ENCODE measurements at regions of chr7 and their contacts with region 1.

Region 1: DNA sequence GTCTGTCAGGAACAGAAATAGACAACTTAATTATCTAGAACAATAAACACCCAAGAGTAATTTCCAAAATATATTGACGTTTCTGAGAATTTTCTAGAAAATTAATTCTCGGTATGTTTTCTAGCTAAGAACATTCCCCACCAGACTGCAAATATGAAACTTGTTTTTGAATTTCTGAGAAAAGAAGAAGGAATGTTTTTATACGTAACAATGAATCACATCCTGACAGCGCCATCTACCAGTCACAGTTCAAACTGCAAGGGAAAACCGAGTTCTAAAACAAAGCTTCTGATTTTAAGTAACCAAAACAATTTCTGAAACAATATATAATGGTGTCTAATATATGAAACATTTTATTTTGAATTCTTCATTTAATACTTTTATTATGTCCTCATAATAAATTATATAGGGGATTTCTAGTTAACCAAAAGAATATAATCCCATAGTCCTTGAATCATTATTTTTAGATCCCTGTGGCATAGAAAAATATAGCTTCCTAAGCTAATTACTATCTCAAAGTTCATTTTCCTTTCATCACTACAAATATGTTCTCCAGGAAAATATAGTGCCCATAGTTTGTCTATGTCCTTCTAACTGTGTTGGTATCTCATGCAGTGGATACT is 34.5 kb upstream of the MEOX2 start:
- DNase-seq: peak; percentile 62
- H3K4me3 Mint-ChIP-seq: no peak overlapping the region
- H3K27ac Mint-ChIP-seq: no peak overlapping the region
- H3K4me1 Mint-ChIP-seq: peaks cover 22% of the 10 kb centered on the region
- H3K27me3 Mint-ChIP-seq: no peaks in the 10 kb centered on the region
- CTCF ChIP-seq: peak; percentile 85

Region 2: DNA sequence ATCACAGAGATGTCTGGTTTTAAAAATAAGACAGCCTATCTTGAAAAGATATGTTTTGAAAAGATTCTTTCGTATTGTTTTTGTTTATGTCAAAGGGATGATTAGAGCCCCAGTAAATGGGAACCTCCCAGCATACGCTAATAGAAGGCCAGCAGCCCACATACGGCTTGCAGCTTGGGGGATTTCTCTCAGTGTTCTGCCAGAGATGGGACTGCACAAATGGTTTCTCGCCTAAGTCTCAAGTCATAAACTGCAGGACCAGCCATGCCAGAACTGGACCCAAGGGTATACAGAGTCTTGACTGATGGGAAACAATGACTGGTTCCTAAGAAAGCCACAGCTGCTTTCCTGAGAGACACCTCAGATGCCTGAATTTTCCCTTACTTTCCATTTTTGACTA is 511.5 kb before region 1 on chr7:
- CTCF ChIA-PET with region 1: no interaction called
- intact Hi-C with region 1: loop called (anchors 10 kb)
- DNase-seq: no peak
- H3K4me3 Mint-ChIP-seq: no peak overlapping the region
- H3K27ac Mint-ChIP-seq: no peak overlapping the region
- H3K4me1 Mint-ChIP-seq: no peaks in the 10 kb centered on the region
- H3K27me3 Mint-ChIP-seq: no peaks in the 10 kb centered on the region
- CTCF ChIP-seq: no peak

Region 3: DNA sequence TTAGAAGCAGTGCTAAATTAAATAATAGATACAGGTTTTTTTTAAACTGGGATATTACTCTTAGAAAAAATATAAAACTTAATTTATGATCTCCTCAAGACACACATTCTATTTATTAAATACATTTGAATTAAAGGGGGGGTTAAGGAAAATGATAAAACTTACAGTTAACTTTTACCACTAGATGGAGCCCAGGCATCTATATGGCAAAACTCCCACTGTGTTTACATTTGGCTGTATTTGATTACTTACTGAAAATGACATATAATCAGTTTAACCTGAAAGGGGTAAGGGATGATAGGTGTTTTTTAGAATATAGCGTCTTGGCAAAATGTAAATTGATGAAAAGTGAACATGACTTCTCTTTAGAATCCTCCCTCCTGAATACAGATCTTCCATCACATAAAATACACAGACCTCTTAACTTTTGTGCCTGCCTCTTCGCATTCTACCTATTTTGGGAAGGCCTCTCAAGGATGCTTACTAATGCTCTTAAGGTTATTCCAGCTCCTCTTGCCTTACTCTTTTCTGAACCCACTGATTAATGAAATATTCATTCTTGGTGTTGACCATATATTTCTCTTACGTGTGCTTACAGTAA is 394.8 kb before region 1 on chr7:
- CTCF ChIA-PET with region 1: interaction called, 3 read pairs
- intact Hi-C with region 1: loop called (anchors 1 kb)
- DNase-seq: no peak
- H3K4me3 Mint-ChIP-seq: no peak overlapping the region
- H3K27ac Mint-ChIP-seq: no peak overlapping the region
- H3K4me1 Mint-ChIP-seq: no peaks in the 10 kb centered on the region
- H3K27me3 Mint-ChIP-seq: no peaks in the 10 kb centered on the region
- CTCF ChIP-seq: peak; percentile 58

Region 4: GRCh38 chr7:15424468-15424867 is 296.5 kb before region 1 on chr7:
- CTCF ChIA-PET with region 1: no interaction called
- intact Hi-C with region 1: no loop called
- DNase-seq: no peak
- H3K4me3 Mint-ChIP-seq: no peak overlapping the region
- H3K27ac Mint-ChIP-seq: no peak overlapping the region
- H3K4me1 Mint-ChIP-seq: no peaks in the 10 kb centered on the region
- H3K27me3 Mint-ChIP-seq: no peaks in the 10 kb centered on the region
- CTCF ChIP-seq: no peak

Region 5: GRCh38 chr7:15561835-15562234 is 159.1 kb before region 1 on chr7 and contains the start of gene AGMO:
- CTCF ChIA-PET with region 1: interaction called, 8 read pairs
- intact Hi-C with region 1: loop called (anchors 1 kb)
- DNase-seq: peak; percentile 87
- H3K4me3 Mint-ChIP-seq: peak within 1 kb of the TSS; percentile 69
- H3K27ac Mint-ChIP-seq: peak within 1 kb of the TSS; percentile 55
- H3K4me1 Mint-ChIP-seq: peaks cover 38% of the 10 kb centered on the region
- H3K27me3 Mint-ChIP-seq: no peaks in the 10 kb centered on the region
- CTCF ChIP-seq: no peak
- total RNA-seq, gene AGMO: 13.2 and 13.9 TPM in 2 replicates

Region 6: GRCh38 chr7:15680446-15680845 is 40.5 kb before region 1 on chr7:
- CTCF ChIA-PET with region 1: no interaction called
- intact Hi-C with region 1: no loop called
- DNase-seq: no peak
- H3K4me3 Mint-ChIP-seq: peak overlapping the region; percentile 47
- H3K27ac Mint-ChIP-seq: peak overlapping the region; percentile 75
- H3K4me1 Mint-ChIP-seq: peaks cover 10% of the 10 kb centered on the region
- H3K27me3 Mint-ChIP-seq: peaks cover 12% of the 10 kb centered on the region
- CTCF ChIP-seq: no peak

Region 7: GRCh38 chr7:16071246-16071857 is 350.4 kb after region 1 on chr7:
- CTCF ChIA-PET with region 1: no interaction called
- intact Hi-C with region 1: loop called (anchors 1 kb)
- DNase-seq: peak; percentile 34
- H3K4me3 Mint-ChIP-seq: no peak overlapping the region
- H3K27ac Mint-ChIP-seq: no peak overlapping the region
- H3K4me1 Mint-ChIP-seq: peaks cover 10% of the 10 kb centered on the region
- H3K27me3 Mint-ChIP-seq: no peaks in the 10 kb centered on the region
- CTCF ChIP-seq: peak; percentile 86

Measured in Calu3 (cell line).